ENCODE measurements at regions of chr2 and their contacts with region 1.

Region 1: GRCh38 chr2:75640621-75641121 is 5.9 kb upstream of the MRPL19 start:
- DNase-seq: peak; percentile 67
- H3K4me3 Mint-ChIP-seq: no peak overlapping the region
- H3K27ac Mint-ChIP-seq: no peak overlapping the region
- H3K4me1 Mint-ChIP-seq: peaks cover 7% of the 10 kb centered on the region
- H3K27me3 Mint-ChIP-seq: peaks cover 21% of the 10 kb centered on the region

Region 2: GRCh38 chr2:74715078-74715791 is 925.4 kb before region 1 on chr2:
- CTCF ChIA-PET with region 1: no interaction called
- POLR2A ChIA-PET with region 1: no interaction called
- intact Hi-C with region 1: no loop called
- DNase-seq: peak; percentile 88
- H3K4me3 Mint-ChIP-seq: peak overlapping the region; percentile 81
- H3K27ac Mint-ChIP-seq: no peak overlapping the region
- H3K4me1 Mint-ChIP-seq: peaks cover 7% of the 10 kb centered on the region
- H3K27me3 Mint-ChIP-seq: peaks cover 4% of the 10 kb centered on the region

Region 3: GRCh38 chr2:75627895-75628504 is 12.7 kb before region 1 on chr2:
- CTCF ChIA-PET with region 1: interaction called, 29 read pairs
- POLR2A ChIA-PET with region 1: interaction called, 3 read pairs
- intact Hi-C with region 1: no loop called
- DNase-seq: peak; percentile 72
- H3K4me3 Mint-ChIP-seq: no peak overlapping the region
- H3K27ac Mint-ChIP-seq: no peak overlapping the region
- H3K4me1 Mint-ChIP-seq: no peaks in the 10 kb centered on the region
- H3K27me3 Mint-ChIP-seq: peaks cover 23% of the 10 kb centered on the region

Region 4: DNA sequence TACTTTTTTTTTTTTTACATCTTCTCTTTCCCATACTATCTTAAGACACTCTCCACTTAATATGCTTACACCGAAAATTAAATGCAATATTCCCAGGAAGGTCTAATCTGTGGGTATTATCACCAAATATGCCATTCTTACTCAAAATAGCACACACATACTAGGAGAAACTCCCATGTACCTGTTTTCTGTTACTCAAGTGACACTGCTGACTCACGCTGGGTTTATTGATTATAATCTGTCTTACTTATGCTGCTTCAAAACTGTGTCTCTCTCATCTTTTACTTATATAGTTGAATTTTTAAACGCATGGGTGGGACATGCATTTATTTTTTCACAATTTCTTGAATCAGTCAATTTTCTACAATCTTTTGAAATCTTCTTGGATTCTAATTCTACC is 35.8 kb after region 1 on chr2:
- CTCF ChIA-PET with region 1: interaction called, 53 read pairs
- POLR2A ChIA-PET with region 1: interaction called, 3 read pairs
- intact Hi-C with region 1: loop called (anchors 1 kb)
- DNase-seq: no peak
- H3K4me3 Mint-ChIP-seq: no peak overlapping the region
- H3K27ac Mint-ChIP-seq: no peak overlapping the region
- H3K4me1 Mint-ChIP-seq: peaks cover 5% of the 10 kb centered on the region
- H3K27me3 Mint-ChIP-seq: no peaks in the 10 kb centered on the region

Measured in activated CD4-positive, alpha-beta memory T cell treated with anti-CD3 and anti-CD28 coated beads for 36 hours (primary cell).